ENCODE measurements at regions of chr1 and their contacts with region 1.

Region 1: GRCh38 chr1:70617728-70618127 is 206.7 kb downstream of the CTH start:
- DNase-seq: no peak
- ATAC-seq: no peak
- H3K4me3 ChIP-seq: no peak overlapping the region
- H3K27ac ChIP-seq: no peak overlapping the region
- H3K4me1 ChIP-seq: no peaks in the 10 kb centered on the region
- H3K27me3 ChIP-seq: peaks cover 46% of the 10 kb centered on the region
- CTCF ChIP-seq: 0 out of 2 replicates have a peak, but pooled peaks have one; percentile 9

Region 2: DNA sequence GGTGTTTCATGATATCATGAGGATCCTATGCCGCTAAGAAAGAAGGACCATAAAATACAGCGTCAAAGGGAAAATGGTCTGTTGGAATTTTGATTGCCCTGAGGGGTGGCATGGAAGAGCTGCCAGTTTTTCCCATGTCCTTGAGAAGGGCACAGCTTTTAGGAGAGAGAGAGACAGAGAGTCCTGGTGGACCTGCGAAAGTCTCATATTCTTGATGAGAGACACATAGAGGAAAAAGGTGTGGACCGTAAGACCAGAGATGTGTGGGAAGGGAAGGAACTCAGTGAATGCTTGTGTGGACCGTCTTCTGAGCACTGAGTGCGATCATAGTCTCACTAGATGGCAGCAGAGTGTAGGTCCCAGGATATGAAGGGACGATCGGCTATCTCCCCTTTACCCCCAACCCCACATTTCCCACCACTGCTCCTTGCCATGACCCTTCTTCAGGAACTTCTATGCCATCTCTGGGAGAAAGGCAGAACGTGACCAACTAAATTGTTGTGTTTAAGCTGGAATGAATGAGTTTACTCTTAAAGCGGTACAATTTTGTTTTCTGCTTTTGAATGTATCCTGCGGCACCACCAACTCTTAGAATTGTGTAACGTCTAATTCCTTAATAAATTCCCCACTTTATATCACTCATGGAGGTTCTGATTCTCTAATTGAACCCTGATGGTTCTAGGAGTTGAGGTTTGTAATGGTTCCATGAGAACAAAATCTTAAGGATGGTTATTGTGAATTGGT is 89.0 kb before region 1 on chr1:
- CTCF ChIA-PET with region 1: no interaction called
- POLR2A ChIA-PET with region 1: no interaction called
- intact Hi-C with region 1: loop called (anchors 5 kb)
- DNase-seq: peak; percentile 56
- ATAC-seq: peak; percentile 95
- H3K4me3 ChIP-seq: no peak overlapping the region
- H3K27ac ChIP-seq: no peak overlapping the region
- H3K4me1 ChIP-seq: no peaks in the 10 kb centered on the region
- H3K27me3 ChIP-seq: peaks cover 48% of the 10 kb centered on the region
- CTCF ChIP-seq: peak; percentile 72

Region 3: GRCh38 chr1:70675737-70676156 is 58.0 kb after region 1 on chr1:
- CTCF ChIA-PET with region 1: no interaction called
- POLR2A ChIA-PET with region 1: no interaction called
- intact Hi-C with region 1: no loop called
- DNase-seq: no peak
- ATAC-seq: no peak
- H3K4me3 ChIP-seq: no peak overlapping the region
- H3K27ac ChIP-seq: no peak overlapping the region
- H3K4me1 ChIP-seq: no peaks in the 10 kb centered on the region
- H3K27me3 ChIP-seq: peaks cover 64% of the 10 kb centered on the region
- CTCF ChIP-seq: no peak

Measured in PC-3 (cell line).